Posterior vena cava (tissue), 2 donors: ENCODE measurements at regions of chr6 and their contacts with region 1.

Region 1: GRCh38 chr6:7129784-7130569 is 22.2 kb downstream of the RREB1 start:
- DNase-seq: peak; percentile 90

Region 2: GRCh38 chr6:7169251-7169721 is 39.3 kb after region 1 on chr6:
- intact Hi-C with region 1: loop called in 1 of 2 experiments (anchors 1 kb)
- DNase-seq: peak; percentile 87

Region 3: DNA sequence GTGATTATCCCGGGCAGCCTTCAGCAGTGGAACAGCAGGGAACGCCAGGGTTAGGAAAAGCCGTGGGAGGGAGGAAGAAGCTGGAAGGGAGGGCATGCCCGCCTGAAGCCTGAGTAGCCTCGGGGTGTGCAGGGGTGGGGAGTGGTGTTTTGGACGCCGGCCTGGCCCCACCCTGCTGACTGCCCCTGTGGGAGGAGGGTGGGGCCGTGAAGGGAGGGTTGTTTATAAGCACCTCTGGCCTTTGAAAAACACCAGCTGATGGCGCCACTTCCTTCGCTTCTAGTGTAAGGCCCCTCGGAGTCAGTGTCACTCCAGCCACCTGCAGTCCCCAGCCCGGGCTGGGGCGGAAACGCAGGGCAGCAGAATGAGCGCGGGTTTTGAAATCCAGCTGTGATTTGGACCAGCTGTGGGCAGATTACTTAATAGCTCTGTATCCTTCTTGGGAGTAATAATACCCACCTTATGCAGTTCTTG is 543.1 kb after region 1 on chr6:
- intact Hi-C with region 1: loop called in 1 of 2 experiments (anchors 5 kb)
- DNase-seq: no peak